PC-3 (cell line): ENCODE measurements at regions of chr18 and their contacts with region 1.

Region 1: DNA sequence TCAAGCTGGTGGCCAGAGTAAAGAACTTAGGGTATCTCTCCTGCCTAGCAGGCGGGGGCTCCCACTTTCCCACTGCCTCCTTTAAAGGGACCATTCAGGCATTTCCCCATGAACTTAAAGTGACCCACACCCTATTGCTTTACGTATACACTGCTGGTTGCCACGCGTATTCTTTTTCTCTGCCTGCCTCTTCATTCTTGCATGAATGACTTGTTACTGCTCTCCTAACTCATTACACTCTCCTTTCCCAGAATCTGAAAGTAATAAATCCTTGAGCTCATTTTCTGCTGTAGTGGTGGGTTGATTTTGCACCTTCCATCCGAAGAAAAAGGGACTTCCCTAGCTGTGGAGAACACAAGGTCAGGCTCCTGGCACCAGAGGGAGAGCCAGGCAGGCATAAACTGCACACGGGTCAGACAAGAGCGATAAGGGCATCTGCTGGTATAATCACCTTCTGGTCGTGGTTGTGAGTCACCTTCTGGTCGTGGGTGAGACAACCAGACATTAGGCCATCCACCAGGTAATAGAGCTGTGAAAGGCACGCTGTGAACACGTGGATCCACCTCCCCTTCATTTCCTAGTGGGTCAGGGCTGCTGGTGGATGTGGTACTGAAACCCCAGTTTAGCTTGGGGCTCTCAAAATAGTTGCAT is 950.3 kb downstream of the SOCS6 start:
- DNase-seq: no peak
- ATAC-seq: no peak
- H3K4me3 ChIP-seq: no peak overlapping the region
- H3K27ac ChIP-seq: no peak overlapping the region
- H3K4me1 ChIP-seq: no peaks in the 10 kb centered on the region
- H3K27me3 ChIP-seq: no peaks in the 10 kb centered on the region
- CTCF ChIP-seq: no peak

Region 2: GRCh38 chr18:71194438-71194837 is 44.7 kb before region 1 on chr18:
- CTCF ChIA-PET with region 1: no interaction called
- POLR2A ChIA-PET with region 1: no interaction called
- intact Hi-C with region 1: no loop called
- DNase-seq: no peak
- ATAC-seq: no peak
- H3K4me3 ChIP-seq: no peak overlapping the region
- H3K27ac ChIP-seq: no peak overlapping the region
- H3K4me1 ChIP-seq: no peaks in the 10 kb centered on the region
- H3K27me3 ChIP-seq: 0 out of 2 replicates have a peak, but pooled peaks cover 6% of the 10 kb centered on the region
- CTCF ChIP-seq: no peak

Region 3: DNA sequence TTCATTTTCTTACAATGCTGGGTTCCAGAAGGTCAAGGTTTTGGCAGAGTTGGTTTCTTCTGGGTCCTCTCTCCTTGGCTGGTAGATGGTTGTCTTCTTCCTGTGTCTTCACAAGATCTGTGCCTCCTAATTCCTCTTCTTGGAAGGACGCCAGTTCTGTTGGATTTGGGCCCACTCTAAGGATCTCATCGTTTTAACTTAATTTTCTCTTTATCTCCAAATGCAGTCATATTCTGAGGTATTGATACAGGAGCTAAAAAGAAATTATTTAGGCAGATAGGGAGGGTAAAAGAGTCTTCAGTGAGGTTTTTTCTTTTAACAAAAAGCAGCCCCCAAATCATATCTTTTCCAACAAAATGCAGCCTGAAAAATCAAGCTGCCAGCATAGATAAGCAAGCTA is 48.2 kb after region 1 on chr18:
- CTCF ChIA-PET with region 1: no interaction called
- POLR2A ChIA-PET with region 1: no interaction called
- intact Hi-C with region 1: loop called (anchors 1 kb)
- DNase-seq: no peak
- ATAC-seq: no peak
- H3K4me3 ChIP-seq: no peak overlapping the region
- H3K27ac ChIP-seq: no peak overlapping the region
- H3K4me1 ChIP-seq: no peaks in the 10 kb centered on the region
- H3K27me3 ChIP-seq: no peaks in the 10 kb centered on the region
- CTCF ChIP-seq: no peak